Activated CD4-positive, alpha-beta T cell treated with anti-CD3 and anti-CD28 coated beads for 36 hours (primary cell): ENCODE measurements at regions of chr11 and their contacts with region 1.

Region 1: GRCh38 chr11:6419009-6419631 is at the start of gene APBB1:
- DNase-seq: peak; percentile 86
- ATAC-seq: peak; percentile 54
- H3K4me3 Mint-ChIP-seq: peak within 1 kb of the TSS; percentile 72
- H3K27ac Mint-ChIP-seq: peak within 1 kb of the TSS; percentile 73
- H3K4me1 Mint-ChIP-seq: peaks cover 7% of the 10 kb centered on the region
- H3K27me3 Mint-ChIP-seq: peaks cover 6% of the 10 kb centered on the region
- total RNA-seq, gene APBB1: 43.2 to 49.8 TPM

Region 2: DNA sequence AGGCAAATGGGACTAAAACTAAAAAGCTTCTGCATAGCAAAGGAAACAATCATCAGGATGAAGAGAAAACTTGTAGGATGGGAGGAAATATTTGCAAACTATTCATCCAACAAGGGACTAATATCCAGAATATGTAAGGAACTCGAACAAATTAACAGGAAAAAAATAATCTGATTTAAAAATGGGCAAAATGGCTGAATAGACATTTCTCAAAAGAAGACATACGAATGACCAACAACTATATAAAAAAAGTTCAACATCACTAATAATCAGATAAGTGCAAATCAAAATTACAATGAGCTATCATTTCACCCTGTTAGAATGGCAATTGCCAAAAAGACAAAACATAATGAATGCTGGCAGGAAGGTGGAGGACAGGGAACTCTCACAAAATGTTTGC is 1337.7 kb before region 1 on chr11:
- CTCF ChIA-PET with region 1: no interaction called
- POLR2A ChIA-PET with region 1: no interaction called
- intact Hi-C with region 1: no loop called
- DNase-seq: no peak
- ATAC-seq: no peak
- H3K4me3 Mint-ChIP-seq: no peak overlapping the region
- H3K27ac Mint-ChIP-seq: no peak overlapping the region
- H3K4me1 Mint-ChIP-seq: no peaks in the 10 kb centered on the region
- H3K27me3 Mint-ChIP-seq: no peaks in the 10 kb centered on the region

Region 3: DNA sequence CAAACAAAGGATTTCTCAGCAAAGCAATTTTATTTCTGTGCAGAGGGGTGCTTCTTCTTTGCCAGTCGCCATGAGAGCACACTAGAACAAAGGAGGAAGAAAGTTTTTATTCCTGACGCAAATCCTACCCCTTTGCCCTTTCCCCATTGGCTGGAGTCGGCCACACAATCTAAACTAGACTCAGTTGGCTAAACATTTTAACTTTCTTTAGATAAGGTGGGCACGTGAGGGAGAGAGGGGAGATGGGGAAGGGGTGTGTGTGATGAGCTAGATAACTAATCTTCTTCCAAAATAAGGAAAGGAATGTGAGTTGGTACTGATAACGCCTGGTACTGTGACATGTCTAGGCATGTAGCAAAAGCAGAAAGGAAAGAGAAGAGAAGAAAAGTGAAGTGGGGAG is 728.9 kb before region 1 on chr11:
- CTCF ChIA-PET with region 1: no interaction called
- POLR2A ChIA-PET with region 1: no interaction called
- intact Hi-C with region 1: loop called in 1 of 2 experiments (anchors 5 kb)
- DNase-seq: no peak
- ATAC-seq: no peak
- H3K4me3 Mint-ChIP-seq: peak overlapping the region; percentile 77
- H3K27ac Mint-ChIP-seq: peak overlapping the region; percentile 94
- H3K4me1 Mint-ChIP-seq: peaks cover 55% of the 10 kb centered on the region
- H3K27me3 Mint-ChIP-seq: no peaks in the 10 kb centered on the region

Region 4: GRCh38 chr11:6402561-6402981 is 16.5 kb before region 1 on chr11:
- CTCF ChIA-PET with region 1: interaction called, 10 read pairs
- POLR2A ChIA-PET with region 1: interaction called, 30 read pairs
- intact Hi-C with region 1: loop called (anchors 1 to 2 kb)
- DNase-seq: peak; percentile 85
- ATAC-seq: peak; percentile 88
- H3K4me3 Mint-ChIP-seq: peak overlapping the region; percentile 65
- H3K27ac Mint-ChIP-seq: peak overlapping the region; percentile 95
- H3K4me1 Mint-ChIP-seq: peaks cover 78% of the 10 kb centered on the region
- H3K27me3 Mint-ChIP-seq: no peaks in the 10 kb centered on the region

Region 5: GRCh38 chr11:6473481-6474422 is 54.6 kb after region 1 on chr11 and contains the start of gene TRIM3:
- CTCF ChIA-PET with region 1: no interaction called
- POLR2A ChIA-PET with region 1: no interaction called
- intact Hi-C with region 1: loop called in 1 of 2 experiments (anchors 1 kb)
- DNase-seq: peak; percentile 74
- ATAC-seq: peak; percentile 59
- H3K4me3 Mint-ChIP-seq: peak within 1 kb of the TSS; percentile 75
- H3K27ac Mint-ChIP-seq: peak within 1 kb of the TSS; percentile 66
- H3K4me1 Mint-ChIP-seq: peaks cover 12% of the 10 kb centered on the region
- H3K27me3 Mint-ChIP-seq: peaks cover 3% of the 10 kb centered on the region
- total RNA-seq, gene TRIM3: 3.8 to 4.2 TPM

Region 6: GRCh38 chr11:6612213-6613041 is 193.3 kb after region 1 on chr11 and contains the start of gene TAF10:
- CTCF ChIA-PET with region 1: no interaction called
- POLR2A ChIA-PET with region 1: no interaction called
- intact Hi-C with region 1: loop called (anchors 1 to 10 kb)
- DNase-seq: peak; percentile 97
- ATAC-seq: peak; percentile 85
- H3K4me3 Mint-ChIP-seq: no peak within 1 kb of the TSS
- H3K27ac Mint-ChIP-seq: peak within 1 kb of the TSS; percentile 93
- H3K4me1 Mint-ChIP-seq: peaks cover 44% of the 10 kb centered on the region
- H3K27me3 Mint-ChIP-seq: no peaks in the 10 kb centered on the region
- total RNA-seq, gene TAF10: 133 to 152 TPM

Region 7: GRCh38 chr11:6737872-6738466 is 318.8 kb after region 1 on chr11:
- CTCF ChIA-PET with region 1: no interaction called
- POLR2A ChIA-PET with region 1: no interaction called
- intact Hi-C with region 1: loop called in 1 of 2 experiments (anchors 5 kb)
- DNase-seq: peak; percentile 76
- ATAC-seq: peak; percentile 52
- H3K4me3 Mint-ChIP-seq: no peak overlapping the region
- H3K27ac Mint-ChIP-seq: peak overlapping the region; percentile 73
- H3K4me1 Mint-ChIP-seq: peaks cover 94% of the 10 kb centered on the region
- H3K27me3 Mint-ChIP-seq: no peaks in the 10 kb centered on the region